T-cell (primary cell): ENCODE measurements at regions of chr6 and their contacts with region 1.

Region 1: GRCh38 chr6:156231026-156231765 is 546.0 kb upstream of the ARID1B start:
- DNase-seq: no peak
- ATAC-seq: no peak
- H3K4me3 ChIP-seq: no peak overlapping the region
- H3K4me3 Mint-ChIP-seq: no peak overlapping the region
- H3K27ac ChIP-seq: no peak overlapping the region
- H3K27ac Mint-ChIP-seq: no peak overlapping the region
- H3K4me1 ChIP-seq: no peaks in the 10 kb centered on the region
- H3K4me1 Mint-ChIP-seq: no peaks in the 10 kb centered on the region
- H3K27me3 ChIP-seq: no peaks in the 10 kb centered on the region
- H3K27me3 Mint-ChIP-seq: no peaks in the 10 kb centered on the region

Region 2: DNA sequence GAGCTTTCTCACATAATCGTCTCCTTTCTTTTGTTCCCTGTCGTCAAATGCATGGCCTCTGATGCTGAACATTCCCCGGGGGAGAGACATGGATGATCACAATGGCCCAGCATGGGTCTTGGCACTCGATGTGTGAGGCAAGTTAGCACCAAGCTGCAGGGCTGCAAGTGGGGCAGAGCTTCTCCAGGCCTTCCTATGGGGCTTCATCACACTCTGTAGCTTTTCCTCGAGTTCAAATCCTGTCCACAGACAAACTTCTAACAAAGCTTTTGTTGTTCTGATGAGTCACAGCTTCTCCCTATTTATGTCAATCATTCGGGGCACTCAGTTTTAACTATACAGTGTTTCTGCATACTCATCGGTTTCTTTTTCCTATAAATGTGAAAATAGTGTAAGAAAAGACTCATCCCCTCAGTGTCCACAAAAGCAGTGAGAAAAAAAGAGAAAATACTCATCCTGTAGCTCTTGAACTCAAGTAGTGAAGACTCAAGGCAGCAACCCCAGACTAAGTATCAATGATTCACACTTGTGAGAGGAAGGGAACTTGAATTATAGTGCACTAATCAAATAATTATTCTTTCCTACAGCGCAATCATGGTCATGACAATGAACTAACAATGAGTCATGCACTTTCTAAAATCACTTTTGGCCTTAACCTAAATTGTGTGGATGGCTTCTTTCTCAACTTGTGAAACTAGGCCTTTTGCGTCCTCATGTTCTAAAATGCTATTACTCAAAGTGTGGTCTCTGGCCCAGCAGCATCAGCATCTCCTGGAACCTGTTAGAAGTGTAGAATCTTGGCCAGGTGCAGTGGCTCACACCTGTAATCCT is 707.2 kb before region 1 on chr6:
- CTCF ChIA-PET with region 1: no interaction called
- POLR2A ChIA-PET with region 1: no interaction called
- DNase-seq: no peak
- ATAC-seq: no peak
- H3K4me3 ChIP-seq: no peak overlapping the region
- H3K4me3 Mint-ChIP-seq: no peak overlapping the region
- H3K27ac ChIP-seq: no peak overlapping the region
- H3K27ac Mint-ChIP-seq: no peak overlapping the region
- H3K4me1 ChIP-seq: peaks cover 0 to 3% of the 10 kb centered on the region in 2 experiments
- H3K4me1 Mint-ChIP-seq: peaks cover 3 to 4% (median 4%) of the 10 kb centered on the region in 3 donors
- H3K27me3 ChIP-seq: no peaks in the 10 kb centered on the region
- H3K27me3 Mint-ChIP-seq: no peaks in the 10 kb centered on the region

Region 3: DNA sequence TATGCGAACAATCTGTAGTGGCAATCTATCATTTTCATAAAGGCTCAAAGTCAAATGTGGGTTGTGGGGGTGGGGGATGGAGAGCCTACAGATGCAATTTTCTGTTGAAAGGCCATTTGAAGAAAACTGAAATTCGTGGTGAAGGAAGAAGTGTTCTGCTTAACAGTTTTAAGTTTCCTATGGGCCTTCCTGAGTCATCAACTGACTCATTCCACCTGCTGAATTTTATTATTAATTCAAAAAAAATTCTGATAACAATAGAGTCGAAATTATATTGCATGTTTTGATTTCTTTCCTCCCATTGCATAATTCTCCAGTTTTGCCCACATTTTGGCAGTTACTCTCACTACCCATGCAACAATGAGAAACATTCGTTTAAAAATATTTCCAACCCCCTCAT is 76.3 kb before region 1 on chr6:
- CTCF ChIA-PET with region 1: no interaction called
- POLR2A ChIA-PET with region 1: no interaction called
- DNase-seq: no peak
- ATAC-seq: no peak
- H3K4me3 ChIP-seq: no peak overlapping the region
- H3K4me3 Mint-ChIP-seq: no peak overlapping the region
- H3K27ac ChIP-seq: no peak overlapping the region
- H3K27ac Mint-ChIP-seq: peak overlapping the region in 1 of 2 donors; percentile 52
- H3K4me1 ChIP-seq: no peaks in the 10 kb centered on the region
- H3K4me1 Mint-ChIP-seq: peaks cover 0 to 13% (median 8%) of the 10 kb centered on the region in 3 donors
- H3K27me3 ChIP-seq: no peaks in the 10 kb centered on the region
- H3K27me3 Mint-ChIP-seq: no peaks in the 10 kb centered on the region

Region 4: DNA sequence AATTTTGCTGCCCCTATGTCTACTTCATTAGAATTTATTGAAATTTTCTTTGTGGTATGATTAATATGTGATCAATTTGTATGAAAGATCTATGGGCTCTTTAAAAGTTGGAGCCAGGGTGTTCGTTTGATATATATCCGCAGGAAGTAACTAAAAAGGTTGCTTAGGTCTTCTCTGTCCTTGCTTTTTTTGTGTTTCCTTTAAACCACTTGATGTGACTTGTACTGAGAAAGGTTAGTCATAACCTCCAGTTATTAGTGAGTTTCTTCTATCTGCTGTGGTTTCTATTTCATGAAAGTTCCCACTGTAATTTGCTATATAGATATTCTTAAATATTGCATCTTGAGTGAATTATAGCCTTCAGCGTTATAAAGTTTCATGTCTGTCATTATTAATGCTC is 39.3 kb before region 1 on chr6:
- CTCF ChIA-PET with region 1: interaction called in 1 of 2 experiments, 11 read pairs
- POLR2A ChIA-PET with region 1: no interaction called
- DNase-seq: peak in 1 of 35 experiments; percentile 9
- ATAC-seq: peak; percentile 47 to 85 (median 65)
- H3K4me3 ChIP-seq: no peak overlapping the region
- H3K4me3 Mint-ChIP-seq: no peak overlapping the region
- H3K27ac ChIP-seq: no peak overlapping the region
- H3K27ac Mint-ChIP-seq: peak overlapping the region; percentile 15 to 74
- H3K4me1 ChIP-seq: peaks cover 0 to 10% of the 10 kb centered on the region in 2 experiments
- H3K4me1 Mint-ChIP-seq: peaks cover 11 to 22% (median 21%) of the 10 kb centered on the region in 3 donors
- H3K27me3 ChIP-seq: no peaks in the 10 kb centered on the region
- H3K27me3 Mint-ChIP-seq: no peaks in the 10 kb centered on the region